PC-9 (cell line): ENCODE measurements at regions of chr7 and their contacts with region 1.

Region 1: DNA sequence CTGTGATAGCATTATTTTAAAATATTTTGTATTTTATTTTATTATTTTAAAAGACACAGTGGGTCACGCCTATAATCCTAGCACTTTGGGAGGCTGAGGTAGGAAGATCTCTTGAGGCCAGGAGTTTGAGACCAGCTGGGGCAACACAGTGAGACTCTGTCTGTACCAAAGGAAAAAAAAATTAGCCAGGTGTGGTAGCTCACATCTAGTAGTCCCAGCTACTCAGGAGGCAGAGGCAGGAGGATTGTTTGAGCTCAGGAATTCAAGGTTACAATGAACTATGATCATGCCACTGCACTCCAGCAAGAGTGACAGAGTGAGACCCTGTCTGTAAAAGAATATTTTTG is 37.1 kb downstream of the FBXL13 start:
- DNase-seq: no peak
- H3K4me3 ChIP-seq: peak overlapping the region; percentile 46; the same call in 1 of the 2 replicates
- H3K27ac ChIP-seq: peak overlapping the region; percentile 61
- H3K4me1 ChIP-seq: peaks cover 17% of the 10 kb centered on the region
- H3K27me3 ChIP-seq: no peaks in the 10 kb centered on the region
- CTCF ChIP-seq: no peak

Region 2: GRCh38 chr7:101357433-101357832 is 1680.0 kb before region 1 on chr7:
- CTCF ChIA-PET with region 1: no interaction called
- POLR2A ChIA-PET with region 1: no interaction called
- intact Hi-C with region 1: no loop called
- DNase-seq: no peak
- H3K4me3 ChIP-seq: no peak overlapping the region
- H3K27ac ChIP-seq: no peak overlapping the region
- H3K4me1 ChIP-seq: peaks cover 1% of the 10 kb centered on the region; the same call in 1 of the 2 replicates
- H3K27me3 ChIP-seq: no peaks in the 10 kb centered on the region
- CTCF ChIP-seq: no peak

Region 3: DNA sequence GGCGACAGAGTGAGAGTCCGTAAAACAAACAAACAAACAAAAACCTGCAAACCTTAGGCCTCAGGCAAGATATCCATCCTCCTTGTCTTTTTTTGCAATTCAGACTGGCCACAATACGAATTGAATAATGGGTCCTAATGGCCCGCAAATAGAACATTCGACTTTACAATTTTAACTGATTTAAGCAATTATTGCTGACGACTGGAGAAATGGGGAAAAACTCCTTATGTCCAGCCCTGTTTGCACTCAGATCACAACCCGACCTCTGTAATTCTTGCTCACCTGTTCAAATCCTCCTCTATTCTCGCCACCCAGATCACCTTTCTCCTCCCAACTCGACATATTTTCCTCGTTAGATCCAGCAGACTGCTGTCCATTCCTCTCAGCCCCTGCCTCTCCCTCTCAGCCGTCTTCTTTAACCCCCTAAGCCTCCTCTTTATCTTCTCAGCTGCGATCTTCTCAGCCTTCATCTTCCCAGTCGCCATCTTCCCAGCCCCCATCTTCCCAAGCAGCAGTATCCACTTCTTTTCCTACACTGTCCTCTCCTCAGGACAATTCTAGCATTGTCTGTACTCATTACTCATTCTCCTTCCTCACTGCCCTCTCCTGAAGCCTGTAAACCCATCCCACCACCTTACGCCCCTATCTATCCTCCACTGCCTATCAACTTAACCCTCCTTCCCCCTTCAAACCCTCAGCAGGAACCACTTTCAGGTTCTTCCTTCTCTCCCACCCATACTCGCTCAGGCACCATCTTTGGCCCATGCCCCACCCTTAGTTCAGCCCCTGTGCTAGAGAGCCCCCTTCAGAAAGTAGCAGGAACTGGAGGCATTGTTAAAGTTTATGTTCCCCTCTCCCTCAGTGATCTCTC is 62.8 kb before region 1 on chr7:
- CTCF ChIA-PET with region 1: no interaction called
- POLR2A ChIA-PET with region 1: interaction called, 3 read pairs
- intact Hi-C with region 1: loop called (anchors 5 kb)
- DNase-seq: no peak
- H3K4me3 ChIP-seq: no peak overlapping the region
- H3K27ac ChIP-seq: no peak overlapping the region
- H3K4me1 ChIP-seq: peaks cover 12% of the 10 kb centered on the region
- H3K27me3 ChIP-seq: no peaks in the 10 kb centered on the region
- CTCF ChIP-seq: no peak

Region 4: DNA sequence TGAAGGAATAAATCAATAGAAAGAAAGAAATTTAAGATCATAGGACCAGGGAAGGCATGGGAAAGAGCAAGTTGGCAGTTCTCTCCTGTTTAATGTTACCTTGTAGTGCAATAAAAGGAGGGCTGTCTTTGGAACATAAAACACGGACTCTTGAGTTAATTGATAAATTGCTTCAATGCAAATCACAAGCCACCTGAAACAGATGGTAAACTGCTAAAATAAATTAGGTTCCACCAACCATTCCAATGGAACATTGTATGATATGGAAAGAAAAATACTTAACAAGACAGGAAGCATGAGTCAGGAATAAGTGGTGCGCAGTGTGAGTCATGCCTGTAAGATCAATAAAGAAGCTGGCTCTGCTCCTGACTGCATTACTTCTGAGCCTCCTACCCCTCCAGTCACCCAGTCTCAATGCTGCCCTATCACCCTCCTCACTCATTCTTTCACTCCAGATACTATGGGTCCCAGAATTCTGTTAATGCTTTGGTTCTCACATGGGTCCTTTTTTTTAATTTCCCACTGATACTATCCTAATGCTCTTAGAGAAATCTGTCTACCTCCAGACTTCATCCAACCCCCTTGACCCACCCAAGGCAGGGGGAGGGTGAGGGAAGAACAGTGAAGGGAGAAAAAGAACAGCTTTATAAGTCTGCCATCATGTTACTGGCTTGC is 45.8 kb before region 1 on chr7:
- CTCF ChIA-PET with region 1: no interaction called
- POLR2A ChIA-PET with region 1: no interaction called
- intact Hi-C with region 1: loop called (anchors 5 kb)
- DNase-seq: peak; percentile 55 to 89
- H3K4me3 ChIP-seq: no peak overlapping the region
- H3K27ac ChIP-seq: peak overlapping the region; percentile 79
- H3K4me1 ChIP-seq: peaks cover 35% of the 10 kb centered on the region
- H3K27me3 ChIP-seq: no peaks in the 10 kb centered on the region
- CTCF ChIP-seq: no peak

Region 5: DNA sequence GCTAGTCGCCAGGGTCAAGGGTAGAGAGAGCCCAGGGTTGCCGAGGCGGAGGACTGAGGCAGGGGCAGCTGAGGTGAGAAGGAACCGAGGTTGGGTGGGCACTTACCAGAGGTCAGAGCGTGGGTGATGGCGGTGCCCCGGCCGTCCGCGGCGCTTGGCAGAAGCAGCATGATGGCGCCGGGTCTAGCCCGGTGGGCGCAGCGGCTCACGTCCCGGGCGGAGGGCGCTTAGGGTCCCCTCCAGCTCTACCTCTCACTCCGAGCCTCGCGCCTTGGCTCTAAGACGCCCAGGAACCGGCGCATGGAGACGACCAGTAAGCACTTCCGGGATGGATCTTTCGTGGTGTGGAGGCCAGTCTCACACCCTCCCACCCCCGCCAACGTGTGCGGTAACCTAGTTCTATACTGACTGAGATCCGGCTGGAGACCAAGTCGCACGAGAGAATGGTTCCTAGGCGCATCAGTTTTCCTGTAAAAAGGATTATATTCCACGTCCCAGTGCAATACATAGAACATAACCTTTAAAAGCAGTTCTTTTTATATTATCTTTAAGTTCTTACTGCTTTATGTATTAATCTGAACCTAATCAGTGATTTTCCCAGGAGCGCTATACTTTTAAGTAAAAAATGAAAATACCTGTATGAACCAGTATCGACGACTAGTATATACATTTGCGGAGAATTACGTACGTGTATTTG is 307.2 kb after region 1 on chr7 and contains the start of gene DNAJC2:
- CTCF ChIA-PET with region 1: no interaction called
- POLR2A ChIA-PET with region 1: no interaction called
- intact Hi-C with region 1: no loop called
- DNase-seq: peak; percentile 82 to 85
- H3K4me3 ChIP-seq: peak within 1 kb of the TSS; percentile 95
- H3K27ac ChIP-seq: peak within 1 kb of the TSS; percentile 76
- H3K4me1 ChIP-seq: peaks cover 37% of the 10 kb centered on the region
- H3K27me3 ChIP-seq: no peaks in the 10 kb centered on the region
- CTCF ChIP-seq: no peak
- total RNA-seq, gene DNAJC2: 37.8 and 42.2 TPM in 2 replicates

Region 6: GRCh38 chr7:103833401-103833800 is 796.0 kb after region 1 on chr7:
- CTCF ChIA-PET with region 1: no interaction called
- POLR2A ChIA-PET with region 1: no interaction called
- intact Hi-C with region 1: no loop called
- DNase-seq: no peak
- H3K4me3 ChIP-seq: no peak overlapping the region
- H3K27ac ChIP-seq: no peak overlapping the region
- H3K4me1 ChIP-seq: no peaks in the 10 kb centered on the region
- H3K27me3 ChIP-seq: no peaks in the 10 kb centered on the region
- CTCF ChIP-seq: no peak